Left cardiac atrium (tissue), 4 donors: ENCODE measurements at regions of chr14 and their contacts with region 1.

Region 1: GRCh38 chr14:24243336-24244164 is 1.1 kb upstream of the TINF2 start:
- DNase-seq: no peak
- ATAC-seq: peak in 1 of 2 donors; percentile 0

Region 2: DNA sequence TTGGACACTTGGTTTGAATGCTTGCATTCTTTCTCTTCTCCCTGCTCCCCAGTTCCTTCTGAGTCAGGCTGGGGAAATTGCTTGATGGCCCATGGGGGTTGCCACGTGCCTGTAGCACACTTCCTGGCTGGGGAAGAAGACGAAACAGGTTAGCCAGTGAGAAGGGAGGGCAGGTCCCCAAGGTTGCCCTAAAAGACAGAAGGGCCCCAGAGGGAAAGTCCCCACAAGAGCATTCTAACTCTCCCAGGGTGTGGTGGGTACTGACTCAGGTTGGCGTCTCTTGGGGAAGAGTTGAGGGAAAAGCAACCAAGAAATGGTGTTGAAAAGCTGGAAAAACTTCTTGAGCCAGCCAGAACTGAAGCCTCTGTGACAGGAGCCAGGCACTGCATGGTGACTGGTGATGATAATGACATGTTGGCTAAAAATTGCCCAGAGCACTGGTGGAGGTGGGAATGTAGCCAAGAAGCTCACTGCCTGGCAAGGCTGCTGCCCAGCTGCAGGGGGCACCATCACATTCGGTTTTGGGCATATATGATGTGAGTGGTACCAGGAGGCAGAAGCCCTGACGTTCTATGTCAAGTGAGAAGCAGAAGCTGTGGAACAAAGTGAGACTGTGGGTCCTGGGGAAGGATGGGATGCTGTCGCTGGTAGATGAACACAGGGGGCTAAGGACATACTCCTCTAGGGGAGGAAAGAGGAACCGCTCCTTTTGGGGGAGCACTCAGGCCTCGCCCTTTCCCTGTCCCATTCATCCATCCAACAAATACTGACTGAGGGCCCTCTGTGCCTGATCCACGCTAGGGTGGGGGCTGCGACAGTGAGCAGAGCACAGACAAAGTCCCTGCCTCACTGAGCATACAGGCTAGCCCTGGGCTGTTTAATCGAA is 36.0 kb after region 1 on chr14:
- intact Hi-C with region 1: loop called in 1 of 2 experiments (anchors 5 kb)
- DNase-seq: no peak
- ATAC-seq: peak; percentile 50 to 78

Region 3: DNA sequence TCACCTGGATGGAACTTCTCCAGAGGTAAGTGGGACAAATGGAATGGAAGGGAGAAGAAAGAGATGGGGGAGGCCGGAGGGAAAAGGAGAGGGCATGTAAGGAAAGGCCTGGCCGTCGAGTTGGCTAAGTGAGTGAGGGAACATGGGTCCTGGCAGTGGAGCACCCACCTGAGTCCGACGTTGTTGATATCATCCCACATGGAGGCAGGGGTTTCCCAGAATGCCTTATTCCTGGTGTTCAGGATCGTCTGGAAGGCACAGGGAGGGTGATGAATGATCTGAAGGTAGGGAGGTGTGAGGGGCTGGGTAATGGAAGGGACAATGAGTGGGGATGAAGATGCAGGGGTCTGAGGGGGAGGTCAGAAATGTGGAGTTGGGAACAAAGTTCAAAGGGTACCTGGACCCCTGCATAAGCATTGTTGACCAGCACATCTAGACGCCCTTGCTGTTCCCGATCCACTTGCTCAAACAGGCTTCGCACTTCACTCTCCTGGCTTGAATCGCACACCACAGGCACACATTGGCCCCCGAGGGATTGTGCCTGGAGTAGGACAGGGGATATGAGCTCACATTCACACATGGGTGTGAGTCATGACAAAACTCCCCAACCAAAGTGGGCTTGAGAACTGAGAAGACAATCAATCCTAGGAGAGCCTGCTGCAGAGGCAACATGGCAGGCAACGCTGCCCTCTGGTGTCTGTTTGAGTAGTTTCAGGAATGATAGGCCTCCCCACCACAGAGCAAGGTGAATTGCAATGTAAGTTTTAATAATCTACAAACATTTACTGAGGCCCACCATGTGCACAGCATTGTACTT is 53.0 kb after region 1 on chr14:
- intact Hi-C with region 1: loop called in 1 of 2 experiments (anchors 1 kb)
- DNase-seq: peak; percentile 69
- ATAC-seq: peak; percentile 55 to 71